ENCODE measurements at regions of chr3 and their contacts with region 1.

Region 1: DNA sequence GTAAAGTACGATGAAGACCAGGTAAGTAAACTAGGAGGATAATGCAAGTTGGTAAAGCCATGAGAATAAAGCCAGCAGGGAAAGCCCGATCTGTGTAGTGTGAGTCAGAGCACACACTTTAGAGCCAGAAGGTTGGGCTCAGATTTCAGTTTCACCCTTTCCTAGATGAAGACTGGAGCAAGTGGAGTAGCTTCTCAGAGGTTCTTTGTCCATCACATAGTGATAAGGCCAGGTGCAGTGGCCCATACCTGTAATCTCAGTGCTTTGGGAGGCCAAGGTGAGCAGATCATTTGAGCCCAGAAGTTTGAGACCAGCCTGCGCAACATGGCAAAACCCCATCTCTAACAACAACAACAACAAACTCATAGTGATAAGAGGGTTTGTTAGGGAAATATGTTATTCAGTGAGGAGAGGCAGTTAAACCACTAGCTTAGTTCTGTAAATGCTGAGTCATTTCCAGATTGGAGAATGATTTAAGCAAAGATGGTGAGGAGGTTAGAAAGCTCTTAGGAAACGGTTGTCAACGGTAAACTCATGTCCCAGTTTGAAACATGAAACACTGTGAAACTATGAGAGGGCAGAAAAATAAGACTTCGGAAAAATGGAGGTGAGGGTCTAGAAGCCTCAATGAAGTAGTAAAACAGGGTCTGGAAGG is 39.0 kb downstream of the IL12A start:
- DNase-seq: peak; percentile 24
- H3K4me3 Mint-ChIP-seq: no peak overlapping the region
- H3K27ac Mint-ChIP-seq: peak overlapping the region; percentile 32
- H3K4me1 Mint-ChIP-seq: peaks cover 12% of the 10 kb centered on the region
- H3K27me3 Mint-ChIP-seq: no peaks in the 10 kb centered on the region

Region 2: GRCh38 chr3:160210799-160211221 is 183.1 kb after region 1 on chr3:
- CTCF ChIA-PET with region 1: interaction called, 4 read pairs
- intact Hi-C with region 1: loop called (anchors 2 kb)
- DNase-seq: no peak
- H3K4me3 Mint-ChIP-seq: no peak overlapping the region
- H3K27ac Mint-ChIP-seq: no peak overlapping the region
- H3K4me1 Mint-ChIP-seq: no peaks in the 10 kb centered on the region
- H3K27me3 Mint-ChIP-seq: peaks cover 20% of the 10 kb centered on the region

Region 3: GRCh38 chr3:160413613-160414248 is 386.1 kb after region 1 on chr3:
- CTCF ChIA-PET with region 1: interaction called, 4 read pairs
- intact Hi-C with region 1: loop called (anchors 1 kb)
- DNase-seq: peak; percentile 65
- H3K4me3 Mint-ChIP-seq: no peak overlapping the region
- H3K27ac Mint-ChIP-seq: no peak overlapping the region
- H3K4me1 Mint-ChIP-seq: peaks cover 2% of the 10 kb centered on the region
- H3K27me3 Mint-ChIP-seq: no peaks in the 10 kb centered on the region

Region 4: GRCh38 chr3:160486459-160486869 is 458.8 kb after region 1 on chr3:
- CTCF ChIA-PET with region 1: interaction called, 6 read pairs
- intact Hi-C with region 1: loop called (anchors 1 kb)
- DNase-seq: peak; percentile 14
- H3K4me3 Mint-ChIP-seq: no peak overlapping the region
- H3K27ac Mint-ChIP-seq: no peak overlapping the region
- H3K4me1 Mint-ChIP-seq: peaks cover 5% of the 10 kb centered on the region
- H3K27me3 Mint-ChIP-seq: peaks cover 7% of the 10 kb centered on the region